GM13977 (cell line): ENCODE measurements at regions of chr7 and their contacts with region 1.

Region 1: GRCh38 chr7:77657427-77658224 is 38.6 kb upstream of the RSBN1L start:
- DNase-seq: peak; percentile 46
- CTCF ChIP-seq: peak; percentile 60

Region 2: DNA sequence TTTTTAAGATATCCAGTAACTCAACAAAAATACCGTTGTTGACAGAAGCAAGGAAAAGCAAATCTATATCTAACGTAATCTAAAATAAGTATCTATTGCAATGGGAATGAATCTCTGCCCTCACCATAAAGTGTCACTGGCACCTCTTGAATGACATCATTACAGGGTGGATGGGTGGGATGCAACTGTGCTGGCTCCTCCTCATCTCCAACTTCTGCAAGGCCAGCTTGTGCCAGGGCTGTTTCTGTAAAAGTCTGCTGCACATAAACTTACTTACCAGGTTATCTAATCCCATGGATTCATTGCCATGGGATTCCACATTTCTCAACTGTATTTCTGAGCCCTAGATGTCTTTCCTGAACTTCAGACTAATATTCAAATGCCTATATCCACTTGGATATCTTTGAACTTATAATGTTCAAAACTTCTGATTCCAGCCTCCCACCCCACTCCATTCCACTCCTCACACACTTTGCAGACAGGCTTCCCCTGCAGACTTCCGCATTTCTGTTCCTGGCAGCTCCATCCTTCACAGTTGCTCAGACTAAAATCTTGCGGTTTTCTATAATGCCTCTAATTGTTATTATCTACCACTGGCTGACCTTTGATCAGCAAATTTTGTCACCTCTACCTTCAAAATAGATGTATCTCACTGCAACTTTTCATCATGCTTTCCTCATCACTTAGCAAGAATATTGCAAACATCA is 468.7 kb before region 1 on chr7:
- in situ Hi-C with region 1: no loop called
- DNase-seq: no peak
- CTCF ChIP-seq: no peak

Region 3: GRCh38 chr7:77940647-77941046 is 283.0 kb after region 1 on chr7:
- in situ Hi-C with region 1: loop called (anchors 25 kb)
- DNase-seq: peak; percentile 52
- CTCF ChIP-seq: peak; percentile 48

Region 4: GRCh38 chr7:78039790-78040776 is 382.5 kb after region 1 on chr7:
- in situ Hi-C with region 1: loop called (anchors 25 kb)
- DNase-seq: peak; percentile 72
- CTCF ChIP-seq: peak; percentile 92